Transverse colon (tissue), 4 donors: ENCODE measurements at regions of chr10 and their contacts with region 1.

Region 1: GRCh38 chr10:107583974-107584373 is 419.5 kb upstream of the SORCS1 start:
- DNase-seq: no peak
- H3K4me3 ChIP-seq: no peak overlapping the region
- H3K27ac ChIP-seq: no peak overlapping the region
- H3K4me1 ChIP-seq: no peaks in the 10 kb centered on the region
- H3K27me3 ChIP-seq: no peaks in the 10 kb centered on the region
- CTCF ChIP-seq: no peak
- EP300 ChIP-seq: no peak
- POLR2A ChIP-seq: no peak

Region 2: GRCh38 chr10:107561136-107561650 is 22.8 kb before region 1 on chr10:
- in situ Hi-C with region 1: no loop called
- intact Hi-C with region 1: loop called (anchors 1 kb)
- DNase-seq: no peak
- H3K4me3 ChIP-seq: no peak overlapping the region
- H3K27ac ChIP-seq: no peak overlapping the region
- H3K4me1 ChIP-seq: no peaks in the 10 kb centered on the region
- H3K27me3 ChIP-seq: no peaks in the 10 kb centered on the region
- CTCF ChIP-seq: no peak
- EP300 ChIP-seq: no peak
- POLR2A ChIP-seq: no peak

Region 3: DNA sequence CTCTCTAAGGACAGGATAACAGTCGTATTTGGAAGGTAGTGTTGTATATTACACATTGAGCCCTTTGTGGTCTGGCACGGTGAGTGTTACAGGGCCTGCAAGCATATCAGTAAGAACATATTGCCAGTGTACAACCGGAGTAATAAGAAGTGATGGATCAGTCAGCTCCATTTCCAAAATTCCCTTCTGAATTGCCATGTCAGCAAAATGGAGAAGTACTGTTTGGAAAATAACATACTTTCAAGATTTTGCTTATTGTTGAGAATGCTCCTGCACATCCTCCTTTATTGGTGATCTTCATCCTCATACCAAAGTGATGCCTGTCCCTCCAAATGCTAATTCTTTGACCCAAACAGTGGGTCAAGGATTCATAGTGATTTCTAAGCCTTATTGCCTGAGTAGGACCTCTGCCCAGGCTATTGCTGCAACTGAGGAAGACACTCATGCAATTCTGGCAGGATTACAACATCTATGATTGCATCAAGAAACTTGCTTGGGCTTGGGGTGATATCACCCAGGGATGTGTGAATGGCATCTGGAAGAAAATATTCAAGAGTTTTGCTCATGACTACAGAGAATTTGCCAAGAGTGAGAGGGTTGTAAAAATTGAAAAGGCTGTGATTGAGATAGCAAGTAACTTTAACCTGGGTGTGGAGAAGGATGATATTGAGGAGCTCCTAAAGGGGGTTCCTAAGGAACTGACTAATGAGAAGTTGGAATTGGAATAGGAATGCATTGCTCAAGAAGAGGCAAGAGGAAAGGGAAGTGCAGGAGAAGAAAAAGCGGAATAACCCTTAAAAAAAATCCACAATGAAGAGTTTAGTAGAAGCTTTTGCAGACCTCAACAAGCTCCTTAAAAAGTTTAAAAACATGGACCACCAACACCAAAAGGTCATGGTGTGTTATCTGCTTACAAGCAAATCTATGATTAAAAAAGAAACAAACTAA is 32.8 kb after region 1 on chr10:
- in situ Hi-C with region 1: no loop called
- intact Hi-C with region 1: no loop called
- DNase-seq: no peak
- H3K4me3 ChIP-seq: no peak overlapping the region
- H3K27ac ChIP-seq: no peak overlapping the region
- H3K4me1 ChIP-seq: no peaks in the 10 kb centered on the region
- H3K27me3 ChIP-seq: no peaks in the 10 kb centered on the region
- CTCF ChIP-seq: no peak
- EP300 ChIP-seq: no peak
- POLR2A ChIP-seq: no peak